MCF 10A (cell line): ENCODE measurements at regions of chr3 and their contacts with region 1.

Region 1: DNA sequence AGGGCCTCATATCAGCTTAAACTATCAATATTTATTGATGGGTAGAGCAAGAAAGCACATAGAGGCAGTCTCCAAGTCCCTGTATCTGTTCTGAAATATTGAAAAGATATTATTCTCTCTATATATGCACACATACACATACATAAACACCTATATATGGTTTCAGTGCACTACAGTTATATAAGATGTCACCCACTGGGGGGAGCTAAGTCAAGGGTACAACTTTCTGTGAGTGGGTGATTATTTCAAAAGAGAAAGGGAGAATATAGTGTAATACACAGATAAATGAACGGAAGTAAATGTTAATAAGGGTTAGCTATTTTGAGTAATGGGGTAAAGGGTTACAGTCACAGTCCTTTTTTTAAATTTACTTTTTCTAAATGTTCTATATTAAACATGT is 8.8 kb downstream of the SNTN start:
- DNase-seq: peak; percentile 23
- H3K4me3 Mint-ChIP-seq: no peak overlapping the region
- H3K27ac Mint-ChIP-seq: no peak overlapping the region
- H3K4me1 Mint-ChIP-seq: no peaks in the 10 kb centered on the region
- H3K27me3 Mint-ChIP-seq: no peaks in the 10 kb centered on the region
- CTCF ChIP-seq: no peak

Region 2: DNA sequence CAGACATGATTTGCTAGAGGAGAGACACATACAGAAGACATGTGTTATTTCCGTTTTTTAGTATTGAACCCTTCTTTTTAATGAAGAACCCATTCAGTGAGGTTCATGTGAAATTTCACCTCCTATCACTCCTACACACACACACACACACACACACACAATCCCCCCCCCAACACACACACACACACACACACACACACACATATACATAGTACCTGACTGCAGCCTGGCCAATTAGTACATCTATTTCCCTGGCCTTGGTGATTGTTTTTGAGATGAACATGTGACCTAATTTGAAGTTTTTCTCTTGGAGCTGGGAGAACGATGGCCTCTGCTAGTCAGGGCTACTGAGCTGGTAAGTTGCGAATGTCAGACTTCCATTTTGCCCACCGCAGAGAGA is 120.5 kb before region 1 on chr3:
- CTCF ChIA-PET with region 1: no interaction called
- POLR2A ChIA-PET with region 1: no interaction called
- intact Hi-C with region 1: no loop called
- DNase-seq: no peak
- H3K4me3 Mint-ChIP-seq: no peak overlapping the region
- H3K27ac Mint-ChIP-seq: no peak overlapping the region
- H3K4me1 Mint-ChIP-seq: no peaks in the 10 kb centered on the region
- H3K27me3 Mint-ChIP-seq: no peaks in the 10 kb centered on the region
- CTCF ChIP-seq: no peak

Region 3: DNA sequence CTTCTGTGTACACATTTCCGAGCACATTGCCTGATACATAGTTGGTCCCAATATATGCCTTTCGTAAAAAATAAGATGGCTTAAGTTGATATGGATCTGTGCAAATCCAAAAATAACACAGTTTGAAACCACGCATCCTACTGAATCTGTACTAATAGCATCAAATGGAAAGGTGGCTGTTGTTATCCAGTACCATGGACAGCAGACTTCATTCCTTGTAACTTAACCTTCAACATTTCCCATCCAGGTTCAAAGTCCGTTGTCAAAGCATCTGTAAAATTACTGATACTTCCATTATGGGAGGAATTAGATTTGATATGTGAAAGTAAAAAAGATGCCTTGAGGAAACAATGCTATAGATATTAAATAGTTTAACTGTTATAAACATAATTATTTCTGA is 92.3 kb after region 1 on chr3:
- CTCF ChIA-PET with region 1: no interaction called
- POLR2A ChIA-PET with region 1: no interaction called
- intact Hi-C with region 1: no loop called
- DNase-seq: peak; percentile 57
- H3K4me3 Mint-ChIP-seq: no peak overlapping the region
- H3K27ac Mint-ChIP-seq: no peak overlapping the region
- H3K4me1 Mint-ChIP-seq: no peaks in the 10 kb centered on the region
- H3K27me3 Mint-ChIP-seq: no peaks in the 10 kb centered on the region
- CTCF ChIP-seq: no peak

Region 4: DNA sequence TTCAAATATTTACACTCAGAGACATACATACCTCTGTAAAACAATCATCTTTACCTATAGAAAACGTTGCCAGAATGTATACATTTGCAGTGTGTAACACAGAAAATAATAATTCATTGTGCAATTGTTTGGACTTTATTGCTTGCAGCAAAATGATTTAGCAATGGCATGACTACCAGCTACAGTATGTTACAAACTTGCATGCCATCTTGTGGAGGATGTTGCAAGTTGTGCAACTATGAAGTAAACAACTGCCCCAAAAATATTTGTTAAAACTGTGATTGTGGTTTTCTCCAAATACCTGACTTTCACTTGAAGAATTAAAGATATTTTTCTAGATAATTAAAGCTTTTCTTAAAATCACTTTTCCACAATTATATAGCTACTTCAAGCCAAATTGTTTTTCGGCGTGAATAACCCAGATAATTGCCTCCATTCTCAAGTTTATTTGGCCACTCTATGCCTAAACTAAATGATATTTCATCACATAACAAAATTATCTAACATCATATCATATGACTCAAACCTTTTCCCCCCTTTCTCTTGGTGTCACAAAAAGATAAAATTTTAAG is 130.8 kb after region 1 on chr3:
- CTCF ChIA-PET with region 1: no interaction called
- POLR2A ChIA-PET with region 1: no interaction called
- intact Hi-C with region 1: loop called (anchors 1 kb)
- DNase-seq: peak; percentile 76
- H3K4me3 Mint-ChIP-seq: no peak overlapping the region
- H3K27ac Mint-ChIP-seq: no peak overlapping the region
- H3K4me1 Mint-ChIP-seq: peaks cover 9% of the 10 kb centered on the region
- H3K27me3 Mint-ChIP-seq: peaks cover 6% of the 10 kb centered on the region
- CTCF ChIP-seq: peak; percentile 63

Region 5: GRCh38 chr3:63863148-63864007 is 202.1 kb after region 1 on chr3 and contains the starts of genes ATXN7 and THOC7:
- CTCF ChIA-PET with region 1: no interaction called
- POLR2A ChIA-PET with region 1: no interaction called
- intact Hi-C with region 1: no loop called
- DNase-seq: peak; percentile 68
- H3K4me3 Mint-ChIP-seq: peak within 1 kb of the TSS; percentile 84
- H3K27ac Mint-ChIP-seq: peak within 1 kb of the TSS; percentile 84
- H3K4me1 Mint-ChIP-seq: peaks cover 46% of the 10 kb centered on the region
- H3K27me3 Mint-ChIP-seq: no peaks in the 10 kb centered on the region
- CTCF ChIP-seq: no peak
- total RNA-seq, gene ATXN7: 29.2 and 36.7 TPM in 2 replicates
- total RNA-seq, gene THOC7: 117 and 123 TPM in 2 replicates